Tibial artery (tissue), 4 donors: ENCODE measurements at regions of chr2 and their contacts with region 1.

Region 1: DNA sequence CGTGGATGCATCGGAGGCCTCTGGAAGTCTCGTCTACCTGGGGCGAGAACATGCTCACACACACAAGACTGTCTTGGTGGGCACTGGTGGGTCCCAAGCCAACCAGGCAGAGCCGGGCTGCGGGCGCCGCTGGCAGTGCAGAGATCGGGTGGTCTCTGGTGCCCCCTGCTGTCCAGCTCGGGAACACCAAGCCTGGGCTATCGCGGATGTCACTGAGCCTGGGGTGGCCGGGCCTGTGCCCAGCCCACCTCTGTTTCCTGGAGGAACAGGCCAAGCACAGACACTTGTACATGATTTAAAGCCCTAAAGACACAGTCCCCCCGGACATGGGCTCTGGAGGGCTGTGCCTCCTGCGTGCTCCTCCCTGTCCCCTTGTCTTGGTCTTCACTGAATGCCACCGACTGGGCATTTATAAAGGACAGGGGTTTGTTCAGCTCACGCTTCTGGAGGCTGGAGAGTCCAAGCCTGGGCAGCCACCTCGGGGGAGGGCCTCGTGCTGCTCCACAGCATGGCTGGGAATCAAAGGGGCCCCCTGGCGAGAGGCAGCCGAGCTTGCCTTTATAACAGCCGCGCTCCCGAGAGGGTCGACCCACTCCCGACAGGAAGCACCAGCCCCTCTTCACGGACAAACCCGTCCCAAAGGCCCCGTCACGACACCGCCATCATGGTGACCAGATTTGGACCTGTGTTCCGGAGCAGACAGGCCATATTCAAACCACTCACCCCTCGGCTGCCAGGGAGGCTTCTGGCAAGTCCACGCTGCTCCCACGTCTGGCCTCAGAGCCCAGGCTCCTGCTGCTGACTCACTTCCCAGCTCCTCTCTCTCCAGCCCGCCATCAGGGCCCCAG is 3.6 kb upstream of the OTOS start:
- DNase-seq: peak; percentile 60 to 78
- H3K4me3 ChIP-seq: no peak overlapping the region
- H3K27ac ChIP-seq: no peak overlapping the region
- H3K4me1 ChIP-seq: peaks cover 0 to 7% (median 2%) of the 10 kb centered on the region in 4 donors
- H3K27me3 ChIP-seq: peaks cover 0 to 54% of the 10 kb centered on the region in 2 donors
- CTCF ChIP-seq: peak; percentile 93 to 96

Region 2: GRCh38 chr2:239902749-239903201 is 241.2 kb before region 1 on chr2:
- intact Hi-C with region 1: no loop called
- DNase-seq: no peak
- H3K4me3 ChIP-seq: no peak overlapping the region
- H3K27ac ChIP-seq: no peak overlapping the region
- H3K4me1 ChIP-seq: no peaks in the 10 kb centered on the region
- H3K27me3 ChIP-seq: no peaks in the 10 kb centered on the region
- CTCF ChIP-seq: no peak

Region 3: GRCh38 chr2:240060977-240061591 is 82.9 kb before region 1 on chr2:
- intact Hi-C with region 1: loop called (anchors 2 kb)
- DNase-seq: no peak
- H3K4me3 ChIP-seq: no peak overlapping the region
- H3K27ac ChIP-seq: no peak overlapping the region
- H3K4me1 ChIP-seq: no peaks in the 10 kb centered on the region
- H3K27me3 ChIP-seq: peaks cover 0 to 24% of the 10 kb centered on the region in 2 donors
- CTCF ChIP-seq: peak; percentile 51 to 54